PC-9 (cell line): ENCODE measurements at regions of chr2 and their contacts with region 1.

Region 1: DNA sequence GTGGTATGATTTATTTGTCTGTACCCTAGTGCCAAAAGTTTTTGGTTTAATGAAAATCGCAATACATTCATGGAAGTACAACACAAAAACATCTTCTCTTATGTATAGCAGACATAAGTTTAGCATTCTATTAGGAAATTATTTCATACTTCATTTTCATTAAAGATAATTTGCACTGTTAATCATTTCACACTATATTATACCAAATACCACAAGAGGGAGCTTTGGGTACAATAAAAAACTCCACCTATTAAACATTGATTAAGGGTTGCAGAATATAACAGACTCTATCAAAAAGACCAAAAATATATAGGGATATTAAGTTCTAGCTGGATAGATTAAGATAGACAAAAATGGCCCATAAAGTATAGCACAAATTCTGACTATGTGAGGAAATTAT is 79.0 kb downstream of the SLC66A3 start:
- DNase-seq: no peak
- H3K4me3 ChIP-seq: no peak overlapping the region
- H3K27ac ChIP-seq: no peak overlapping the region
- H3K4me1 ChIP-seq: no peaks in the 10 kb centered on the region
- H3K27me3 ChIP-seq: no peaks in the 10 kb centered on the region
- CTCF ChIP-seq: peak; percentile 82

Region 2: DNA sequence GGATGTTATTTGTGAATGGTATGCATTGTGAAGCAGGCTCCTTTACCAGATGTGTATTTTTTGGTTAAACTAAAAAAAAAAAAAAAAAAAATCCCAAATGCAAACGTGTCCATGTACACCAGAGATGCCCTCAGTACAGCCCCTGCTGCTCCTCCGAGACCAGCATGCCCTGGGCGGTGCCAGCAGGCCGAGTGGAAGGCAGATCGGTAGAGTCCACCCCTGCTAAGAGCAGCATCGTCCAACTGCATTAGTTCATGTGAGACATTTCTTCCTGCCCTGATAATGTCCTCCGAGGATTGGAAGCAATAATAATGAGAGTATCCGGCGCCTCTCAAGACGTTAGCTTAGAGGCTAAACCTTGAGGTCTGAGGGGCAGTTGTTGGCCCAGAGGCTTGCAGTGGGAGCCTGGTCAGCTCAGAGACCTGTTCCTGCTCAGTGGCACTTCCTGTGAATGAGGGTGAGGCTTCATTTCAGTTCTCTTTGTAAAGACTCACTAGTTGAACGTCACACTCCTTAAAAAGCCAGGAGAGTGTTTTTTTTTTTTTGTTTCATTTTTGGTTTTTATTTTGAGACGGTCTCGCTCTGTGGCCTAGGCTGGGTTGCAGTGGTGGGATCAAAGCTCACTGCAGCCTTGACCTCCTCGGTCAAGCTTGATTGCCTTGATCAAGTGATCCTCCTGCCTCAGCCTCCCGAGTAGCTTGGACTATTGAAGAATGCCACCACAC is 73.4 kb before region 1 on chr2:
- CTCF ChIA-PET with region 1: no interaction called
- POLR2A ChIA-PET with region 1: no interaction called
- intact Hi-C with region 1: no loop called
- DNase-seq: no peak
- H3K4me3 ChIP-seq: no peak overlapping the region
- H3K27ac ChIP-seq: no peak overlapping the region
- H3K4me1 ChIP-seq: peaks cover 4% of the 10 kb centered on the region
- H3K27me3 ChIP-seq: no peaks in the 10 kb centered on the region
- CTCF ChIP-seq: no peak

Region 3: DNA sequence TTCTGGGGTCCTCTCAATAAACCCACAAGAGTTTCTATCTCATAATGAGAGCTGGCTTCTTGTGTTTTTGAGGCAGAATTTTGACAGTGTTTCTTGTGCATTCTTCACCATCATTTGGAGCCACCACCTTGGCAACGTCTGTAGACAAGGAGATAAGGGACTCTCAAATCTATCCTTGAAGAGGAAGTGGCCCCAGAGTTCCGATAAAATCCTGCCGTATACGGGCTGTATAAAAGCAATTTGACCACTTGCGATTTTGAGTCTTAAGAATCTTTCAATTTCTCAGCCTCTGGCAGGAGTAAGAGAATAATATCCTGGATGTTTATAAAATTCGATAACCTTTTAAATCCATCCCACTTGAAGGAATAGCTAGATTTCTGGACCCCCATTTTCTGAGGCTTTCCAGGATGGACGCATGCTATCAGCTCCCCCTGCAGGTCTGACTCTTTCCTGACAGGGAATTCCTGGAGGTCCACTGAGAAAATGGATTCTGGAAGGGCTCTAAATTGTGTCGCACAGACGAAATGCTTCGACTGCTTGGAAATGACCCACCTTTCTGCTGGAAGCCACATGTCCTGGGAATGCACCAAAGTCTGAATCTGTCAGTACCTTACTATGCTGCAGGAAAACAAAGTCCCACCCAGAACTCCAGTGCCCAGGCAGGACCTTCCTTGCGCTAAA is 177.6 kb after region 1 on chr2:
- CTCF ChIA-PET with region 1: interaction called, 5 read pairs
- POLR2A ChIA-PET with region 1: no interaction called
- intact Hi-C with region 1: loop called (anchors 1 kb)
- DNase-seq: peak in 1 of 2 experiments; percentile 20
- H3K4me3 ChIP-seq: no peak overlapping the region
- H3K27ac ChIP-seq: no peak overlapping the region
- H3K4me1 ChIP-seq: no peaks in the 10 kb centered on the region
- H3K27me3 ChIP-seq: no peaks in the 10 kb centered on the region
- CTCF ChIP-seq: peak; percentile 74

Region 4: GRCh38 chr2:11446733-11447248 is 212.5 kb after region 1 on chr2:
- CTCF ChIA-PET with region 1: no interaction called
- POLR2A ChIA-PET with region 1: no interaction called
- intact Hi-C with region 1: loop called (anchors 1 kb)
- DNase-seq: peak in 1 of 2 experiments; percentile 23
- H3K4me3 ChIP-seq: no peak overlapping the region
- H3K27ac ChIP-seq: no peak overlapping the region
- H3K4me1 ChIP-seq: no peaks in the 10 kb centered on the region
- H3K27me3 ChIP-seq: no peaks in the 10 kb centered on the region
- CTCF ChIP-seq: peak; percentile 92